Activated T-helper 1 cell treated with anti-CD3 and anti-CD28 coated beads, Interleukin-12 subunit alpha, Interleukin-12 subunit beta, Interleukin-2, Interleukin-4 antibody, amounts not matched to agents 30 ng/mL and 10 ng/mL and 1 ng/mL, durations not matched to agents 14 hours and 24 hours and 36 hours (primary cell): ENCODE measurements at regions of chr6 and their contacts with region 1.

Region 1: GRCh38 chr6:56595490-56596122 is 47.1 kb downstream of the DST start:
- DNase-seq: peak; percentile 17
- H3K4me3 Mint-ChIP-seq: no peak overlapping the region
- H3K27ac Mint-ChIP-seq: no peak overlapping the region
- H3K4me1 Mint-ChIP-seq: peaks cover 29% of the 10 kb centered on the region
- H3K27me3 Mint-ChIP-seq: peaks cover 1% of the 10 kb centered on the region

Region 2: DNA sequence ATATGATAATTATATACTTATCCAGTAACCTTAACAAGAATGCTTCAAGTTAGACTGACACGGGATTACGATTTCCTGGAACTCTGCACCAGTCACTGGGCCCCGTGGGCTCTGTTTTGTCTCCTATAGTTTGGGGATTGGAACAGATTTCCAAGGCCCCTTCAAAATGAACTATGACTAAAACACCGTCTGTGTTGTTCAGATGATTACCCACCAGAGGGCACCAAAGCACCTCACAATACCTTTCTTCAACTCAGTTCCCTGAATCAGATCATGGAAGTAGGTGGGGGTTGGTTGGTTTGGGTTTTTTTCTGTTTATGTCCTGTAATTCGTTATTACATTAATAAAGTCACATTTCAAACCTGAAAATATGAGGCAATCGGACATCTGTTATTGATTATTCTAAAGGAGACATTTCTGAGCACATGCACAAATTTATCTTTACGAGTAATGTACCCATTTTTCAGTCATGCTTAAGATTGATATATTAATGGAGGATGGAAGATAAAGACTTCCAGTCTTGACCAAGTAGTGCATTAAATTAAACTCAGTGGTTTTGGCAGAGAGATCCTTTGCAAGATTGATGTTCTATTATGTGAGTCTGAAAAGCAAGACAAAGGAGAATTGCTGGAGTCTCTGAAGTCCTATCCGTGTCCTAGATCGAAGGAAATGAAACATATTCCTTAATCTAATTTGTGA is 236.3 kb before region 1 on chr6:
- intact Hi-C with region 1: loop called (anchors 1 kb)
- DNase-seq: peak; percentile 17
- H3K4me3 Mint-ChIP-seq: no peak overlapping the region
- H3K27ac Mint-ChIP-seq: no peak overlapping the region
- H3K4me1 Mint-ChIP-seq: no peaks in the 10 kb centered on the region
- H3K27me3 Mint-ChIP-seq: peaks cover 6% of the 10 kb centered on the region

Region 3: DNA sequence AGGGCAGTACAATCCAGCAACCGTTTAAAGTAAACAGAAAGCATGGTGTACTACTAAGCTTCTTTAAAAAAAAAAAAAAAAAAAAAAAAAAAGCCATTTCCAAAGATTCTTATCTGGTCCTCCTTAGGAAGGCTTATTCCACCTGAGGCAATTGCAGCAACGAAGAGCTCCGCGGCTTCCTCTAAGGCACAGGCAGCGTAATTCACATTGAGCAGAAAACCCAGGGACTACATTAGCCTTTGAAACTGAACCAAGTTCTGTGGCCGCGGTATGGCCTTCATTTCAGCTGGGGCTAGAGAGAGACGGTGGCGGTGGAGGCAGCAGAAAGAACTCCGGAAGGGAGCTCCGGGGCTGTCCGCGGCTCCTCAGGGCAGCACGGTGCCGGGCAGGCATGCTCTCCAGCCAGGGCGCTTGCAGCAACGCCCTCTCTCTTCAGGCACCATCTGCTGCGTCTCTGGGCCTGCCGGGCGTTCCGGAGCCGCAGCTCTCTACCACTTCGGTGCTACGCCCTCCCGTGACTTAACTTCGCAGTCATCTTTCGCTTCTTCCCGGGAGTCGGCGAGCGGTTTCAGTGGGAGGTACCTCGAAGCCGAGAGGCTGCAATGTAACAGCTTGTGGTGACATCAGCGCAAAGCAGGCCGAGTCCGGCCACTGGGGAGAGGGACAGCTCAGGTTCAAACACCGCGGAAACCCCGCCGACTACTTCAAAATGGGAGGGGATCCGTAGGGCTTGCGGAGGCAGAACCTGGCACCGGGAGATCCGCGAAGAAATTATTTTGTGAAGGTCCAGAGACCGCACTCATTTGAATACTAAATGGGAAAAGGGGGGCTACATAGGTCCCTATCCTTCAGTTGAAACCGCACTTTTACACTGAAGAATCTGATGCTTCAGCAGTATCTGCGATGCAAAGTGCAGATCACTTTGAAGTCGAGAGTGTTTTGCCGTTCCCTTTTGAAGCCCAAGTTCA is 53.0 kb before region 1 on chr6:
- intact Hi-C with region 1: loop called (anchors 1 kb)
- DNase-seq: peak; percentile 66
- H3K4me3 Mint-ChIP-seq: no peak overlapping the region
- H3K27ac Mint-ChIP-seq: no peak overlapping the region
- H3K4me1 Mint-ChIP-seq: no peaks in the 10 kb centered on the region
- H3K27me3 Mint-ChIP-seq: peaks cover 11% of the 10 kb centered on the region

Region 4: GRCh38 chr6:56642366-56643261 is 47.0 kb after region 1 on chr6 and contains the start of gene DST:
- intact Hi-C with region 1: no loop called
- DNase-seq: no peak
- H3K4me3 Mint-ChIP-seq: no peak within 1 kb of the TSS
- H3K27ac Mint-ChIP-seq: no peak within 1 kb of the TSS
- H3K4me1 Mint-ChIP-seq: no peaks in the 10 kb centered on the region
- H3K27me3 Mint-ChIP-seq: no peaks in the 10 kb centered on the region
- total RNA-seq, gene DST: 6.0 and 11.2 TPM in 2 replicates

Region 5: DNA sequence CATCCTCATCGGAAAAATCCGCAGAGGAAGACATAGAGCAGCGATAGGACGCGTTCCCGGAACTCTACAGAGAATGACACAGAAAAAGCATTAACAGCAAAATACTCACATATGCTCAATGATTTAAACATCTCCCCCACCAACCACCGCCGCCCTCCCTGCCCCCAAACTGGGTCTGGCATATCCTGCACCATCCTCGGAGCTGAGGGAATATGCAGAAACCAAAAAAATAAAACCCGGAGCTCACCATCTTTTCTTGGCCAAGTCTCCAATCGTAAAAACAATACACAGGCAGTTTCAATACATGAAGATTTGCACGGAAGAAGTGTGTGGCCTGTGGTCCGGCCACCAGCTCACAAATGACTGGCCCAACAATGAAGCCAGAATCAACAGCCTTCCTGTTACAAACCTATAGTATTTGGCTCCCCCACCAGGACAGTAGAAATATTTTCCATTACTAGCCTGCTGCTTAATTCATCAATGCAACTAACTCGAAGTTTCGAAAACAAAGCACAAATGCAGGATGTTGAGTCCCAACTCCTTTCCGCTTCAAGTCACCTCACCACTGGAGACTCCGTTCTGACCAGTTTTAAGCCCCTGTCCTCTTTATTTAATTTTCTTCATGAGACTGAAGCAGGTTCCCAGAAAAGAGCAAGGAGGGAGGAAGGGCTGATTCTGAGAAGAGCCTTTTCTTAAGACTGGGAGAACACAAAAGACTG is 256.1 kb after region 1 on chr6:
- intact Hi-C with region 1: loop called (anchors 2 kb)
- DNase-seq: peak; percentile 37
- H3K4me3 Mint-ChIP-seq: peak overlapping the region; percentile 81
- H3K27ac Mint-ChIP-seq: peak overlapping the region; percentile 78
- H3K4me1 Mint-ChIP-seq: peaks cover 30% of the 10 kb centered on the region
- H3K27me3 Mint-ChIP-seq: peaks cover 24% of the 10 kb centered on the region

Region 6: GRCh38 chr6:57048577-57048976 is 453.0 kb after region 1 on chr6:
- intact Hi-C with region 1: loop called (anchors 5 kb)
- DNase-seq: no peak
- H3K4me3 Mint-ChIP-seq: peak overlapping the region; percentile 84
- H3K27ac Mint-ChIP-seq: no peak overlapping the region
- H3K4me1 Mint-ChIP-seq: peaks cover 35% of the 10 kb centered on the region
- H3K27me3 Mint-ChIP-seq: peaks cover 23% of the 10 kb centered on the region